ENCODE measurements at regions of chr17 and their contacts with region 1.

Region 1: GRCh38 chr17:45277216-45277849 is 15.4 kb upstream of the SPATA32 start:
- DNase-seq: peak; percentile 84 to 97 (median 90)
- ATAC-seq: peak; percentile 96
- H3K4me3 ChIP-seq: no peak overlapping the region
- H3K4me3 Mint-ChIP-seq: no peak overlapping the region
- H3K27ac ChIP-seq: peak overlapping the region in 1 of 2 donors; percentile 22
- H3K27ac Mint-ChIP-seq: peak overlapping the region; percentile 51
- H3K4me1 ChIP-seq: peaks cover 6% of the 10 kb centered on the region
- H3K4me1 Mint-ChIP-seq: peaks cover 12% of the 10 kb centered on the region
- H3K27me3 ChIP-seq: no peaks in the 10 kb centered on the region
- H3K27me3 Mint-ChIP-seq: no peaks in the 10 kb centered on the region
- CTCF ChIP-seq: peak; percentile 83

Region 2: GRCh38 chr17:45261577-45262515 is 15.5 kb before region 1 on chr17 and contains the start of gene SPATA32:
- CTCF ChIA-PET with region 1: interaction called, 14 read pairs
- POLR2A ChIA-PET with region 1: interaction called, 4 read pairs
- intact Hi-C with region 1: no loop called
- DNase-seq: peak; percentile 38 to 80 (median 66)
- ATAC-seq: peak; percentile 88
- H3K4me3 ChIP-seq: peak within 1 kb of the TSS; percentile 75
- H3K4me3 Mint-ChIP-seq: peak within 1 kb of the TSS; percentile 89
- H3K27ac ChIP-seq: peak within 1 kb of the TSS; percentile 65
- H3K27ac Mint-ChIP-seq: peak within 1 kb of the TSS; percentile 84
- H3K4me1 ChIP-seq: peaks cover 37% of the 10 kb centered on the region
- H3K4me1 Mint-ChIP-seq: peaks cover 40% of the 10 kb centered on the region
- H3K27me3 ChIP-seq: no peaks in the 10 kb centered on the region
- H3K27me3 Mint-ChIP-seq: no peaks in the 10 kb centered on the region
- CTCF ChIP-seq: no peak
- total RNA-seq, gene SPATA32: 0.20 to 0.27 TPM

Region 3: DNA sequence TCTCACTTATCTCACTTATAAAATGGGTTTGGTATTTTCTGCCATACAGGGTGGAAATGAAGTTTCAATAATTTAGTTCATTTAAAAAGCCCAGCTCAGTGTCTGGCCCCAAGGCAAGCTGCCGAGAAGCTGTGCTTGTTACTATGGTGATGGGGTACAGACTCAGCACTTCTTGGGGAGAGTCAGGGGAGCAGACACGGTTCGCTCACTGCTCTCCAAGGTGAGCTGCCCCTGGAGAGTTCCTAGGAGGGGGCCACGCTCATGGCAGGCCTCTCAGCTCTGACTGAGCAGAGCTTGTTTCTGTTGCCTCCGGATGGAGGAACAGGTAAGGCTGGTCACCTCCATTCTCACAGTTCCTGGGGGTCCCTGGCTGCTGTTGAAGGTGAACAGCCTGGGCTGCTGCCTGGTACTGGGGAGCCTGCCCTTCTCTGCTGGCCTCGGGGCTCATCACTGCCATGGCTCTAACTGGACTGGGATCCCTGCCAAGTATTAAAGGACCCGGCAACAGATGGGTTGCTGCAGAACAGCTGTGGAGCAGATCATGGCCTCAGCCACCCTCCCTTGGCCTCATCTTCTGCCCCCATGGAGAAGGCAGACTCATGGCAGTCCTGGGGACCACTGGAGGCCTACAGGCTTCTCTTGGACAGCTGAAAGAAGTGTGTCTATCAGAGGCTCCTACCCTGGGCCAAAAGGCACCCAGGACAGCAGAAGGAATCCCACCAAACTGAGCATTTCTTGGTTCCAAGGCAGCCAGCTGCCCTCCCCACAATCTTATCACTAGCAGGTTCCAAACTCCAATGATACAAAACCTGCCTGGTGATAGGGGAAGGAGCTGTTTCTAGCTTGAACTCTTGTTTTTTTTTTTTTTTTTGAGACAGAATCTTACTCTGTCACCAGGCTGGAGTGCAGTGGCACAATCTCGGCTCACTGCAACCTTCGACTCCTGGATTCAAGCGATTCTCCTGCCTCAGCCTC is 10.5 kb after region 1 on chr17:
- CTCF ChIA-PET with region 1: interaction called, 10 read pairs
- POLR2A ChIA-PET with region 1: no interaction called
- intact Hi-C with region 1: no loop called
- DNase-seq: no peak
- ATAC-seq: no peak
- H3K4me3 ChIP-seq: no peak overlapping the region
- H3K4me3 Mint-ChIP-seq: no peak overlapping the region
- H3K27ac ChIP-seq: peak overlapping the region in 1 of 2 donors; percentile 42
- H3K27ac Mint-ChIP-seq: peak overlapping the region; percentile 14
- H3K4me1 ChIP-seq: peaks cover 12% of the 10 kb centered on the region
- H3K4me1 Mint-ChIP-seq: peaks cover 11% of the 10 kb centered on the region
- H3K27me3 ChIP-seq: no peaks in the 10 kb centered on the region
- H3K27me3 Mint-ChIP-seq: no peaks in the 10 kb centered on the region
- CTCF ChIP-seq: no peak

Region 4: DNA sequence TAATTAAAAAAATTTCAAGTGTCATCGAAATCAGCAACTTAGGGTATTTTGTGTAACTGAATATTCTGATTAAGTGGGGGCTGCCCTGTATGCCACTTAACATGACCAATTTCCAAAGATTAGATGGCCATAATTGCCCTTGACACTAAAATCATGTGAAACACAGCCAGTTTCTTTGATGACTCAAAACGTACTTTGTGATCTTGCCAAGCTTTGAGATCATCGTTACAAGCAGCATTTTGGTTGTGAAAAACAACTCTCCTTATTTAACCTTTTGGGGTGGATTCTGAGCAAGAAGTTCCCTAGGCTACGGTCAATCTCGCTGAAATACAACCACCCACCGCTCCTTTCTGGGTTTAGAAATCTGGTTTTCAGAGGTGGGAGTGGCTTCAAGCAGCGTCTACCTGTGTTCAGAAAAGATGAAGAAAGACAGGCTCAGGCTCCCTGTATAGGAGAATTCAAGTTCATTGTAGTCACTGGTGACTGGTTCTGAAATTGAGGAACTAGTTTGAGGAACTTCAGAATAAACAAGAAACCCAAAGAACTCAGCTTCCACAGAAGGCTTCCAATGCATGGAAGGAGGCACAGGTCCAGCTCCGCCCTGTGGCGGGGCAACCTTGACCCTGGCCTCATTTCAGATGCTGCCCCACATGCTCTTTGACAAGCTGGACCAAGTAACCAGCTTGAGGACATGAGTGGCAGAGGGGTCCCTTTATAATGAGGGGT is 30.1 kb after region 1 on chr17:
- CTCF ChIA-PET with region 1: interaction called, 21 read pairs
- POLR2A ChIA-PET with region 1: interaction called, 23 read pairs
- intact Hi-C with region 1: no loop called
- DNase-seq: peak in 6 of 14 experiments; percentile 18 to 66 (median 42)
- ATAC-seq: peak; percentile 72
- H3K4me3 ChIP-seq: no peak overlapping the region
- H3K4me3 Mint-ChIP-seq: peak overlapping the region; percentile 66
- H3K27ac ChIP-seq: peak overlapping the region; percentile 26 to 38
- H3K27ac Mint-ChIP-seq: peak overlapping the region; percentile 82
- H3K4me1 ChIP-seq: peaks cover 85% of the 10 kb centered on the region
- H3K4me1 Mint-ChIP-seq: peaks cover 83% of the 10 kb centered on the region
- H3K27me3 ChIP-seq: no peaks in the 10 kb centered on the region
- H3K27me3 Mint-ChIP-seq: no peaks in the 10 kb centered on the region
- CTCF ChIP-seq: no peak

Region 5: DNA sequence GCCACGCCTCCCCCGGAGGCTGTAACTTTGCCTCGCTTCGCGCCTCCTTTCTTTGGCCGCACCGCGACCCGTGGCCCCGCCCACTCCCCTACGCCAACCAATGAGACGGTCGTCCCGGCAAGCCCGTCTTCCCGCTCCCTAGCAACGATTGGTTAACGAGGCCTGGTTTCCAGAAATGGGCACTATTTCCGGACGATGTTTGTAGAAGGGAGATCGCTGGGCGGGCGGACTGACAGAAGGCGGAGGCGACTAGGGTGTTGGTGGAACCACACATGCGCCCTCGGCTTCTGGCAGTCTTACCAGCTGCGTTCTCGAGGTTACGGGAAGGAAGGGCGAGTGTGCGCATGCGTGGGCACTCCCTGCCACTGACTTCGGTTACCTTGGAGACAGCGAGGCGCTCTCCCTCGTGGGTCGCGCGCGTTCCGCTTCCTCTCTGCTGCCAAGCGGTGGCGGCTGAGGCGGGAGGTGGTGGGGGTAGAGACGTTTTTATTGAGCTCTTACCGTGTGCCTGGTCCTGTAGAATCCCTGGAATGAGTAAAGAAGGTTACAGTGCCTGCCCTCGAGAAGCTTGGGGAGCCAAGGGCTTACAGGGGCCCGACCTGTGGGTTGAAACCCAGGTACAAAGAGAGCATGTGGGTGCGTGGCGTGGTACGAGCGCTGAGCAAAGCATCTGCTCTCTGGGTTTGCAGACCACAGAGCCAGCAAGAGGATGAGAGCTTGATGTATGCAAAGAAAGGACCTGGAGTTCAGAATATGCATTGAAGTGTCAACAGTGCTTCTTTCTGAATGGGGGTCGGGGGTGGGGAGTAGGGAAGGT is 40.0 kb after region 1 on chr17:
- CTCF ChIA-PET with region 1: interaction called, 48 read pairs
- POLR2A ChIA-PET with region 1: interaction called, 45 read pairs
- intact Hi-C with region 1: loop called (anchors 2 kb)
- DNase-seq: peak; percentile 93 to 100 (median 100)
- ATAC-seq: peak; percentile 83
- H3K4me3 ChIP-seq: peak overlapping the region; percentile 88
- H3K4me3 Mint-ChIP-seq: peak overlapping the region; percentile 98
- H3K27ac ChIP-seq: peak overlapping the region; percentile 51 to 79
- H3K27ac Mint-ChIP-seq: peak overlapping the region; percentile 85
- H3K4me1 ChIP-seq: peaks cover 81% of the 10 kb centered on the region
- H3K4me1 Mint-ChIP-seq: peaks cover 88% of the 10 kb centered on the region
- H3K27me3 ChIP-seq: no peaks in the 10 kb centered on the region
- H3K27me3 Mint-ChIP-seq: no peaks in the 10 kb centered on the region
- CTCF ChIP-seq: no peak

Region 6: DNA sequence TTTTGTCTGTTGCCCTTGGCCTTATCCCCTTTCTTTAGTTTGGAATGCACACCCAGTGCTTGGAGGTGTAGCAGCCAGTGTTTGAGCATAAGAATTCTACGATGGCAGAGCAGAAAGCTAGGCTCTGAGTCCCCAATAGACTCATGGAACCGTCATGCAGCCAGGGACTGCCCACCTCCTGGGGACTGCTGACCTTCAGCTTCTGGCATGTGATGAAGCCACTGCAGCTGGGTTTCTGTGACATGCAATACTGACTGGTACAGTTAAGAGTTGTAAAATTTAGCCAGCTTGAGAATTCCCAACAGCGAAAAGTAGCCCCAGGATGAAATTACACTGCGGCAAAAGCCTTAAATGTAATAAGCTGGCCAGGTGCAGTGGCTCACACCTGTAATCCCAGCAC is 48.5 kb after region 1 on chr17:
- CTCF ChIA-PET with region 1: interaction called, 15 read pairs
- POLR2A ChIA-PET with region 1: interaction called, 3 read pairs
- intact Hi-C with region 1: no loop called
- DNase-seq: no peak
- ATAC-seq: no peak
- H3K4me3 ChIP-seq: no peak overlapping the region
- H3K4me3 Mint-ChIP-seq: no peak overlapping the region
- H3K27ac ChIP-seq: no peak overlapping the region
- H3K27ac Mint-ChIP-seq: no peak overlapping the region
- H3K4me1 ChIP-seq: peaks cover 14% of the 10 kb centered on the region
- H3K4me1 Mint-ChIP-seq: peaks cover 20% of the 10 kb centered on the region
- H3K27me3 ChIP-seq: no peaks in the 10 kb centered on the region
- H3K27me3 Mint-ChIP-seq: no peaks in the 10 kb centered on the region
- CTCF ChIP-seq: no peak

Region 7: DNA sequence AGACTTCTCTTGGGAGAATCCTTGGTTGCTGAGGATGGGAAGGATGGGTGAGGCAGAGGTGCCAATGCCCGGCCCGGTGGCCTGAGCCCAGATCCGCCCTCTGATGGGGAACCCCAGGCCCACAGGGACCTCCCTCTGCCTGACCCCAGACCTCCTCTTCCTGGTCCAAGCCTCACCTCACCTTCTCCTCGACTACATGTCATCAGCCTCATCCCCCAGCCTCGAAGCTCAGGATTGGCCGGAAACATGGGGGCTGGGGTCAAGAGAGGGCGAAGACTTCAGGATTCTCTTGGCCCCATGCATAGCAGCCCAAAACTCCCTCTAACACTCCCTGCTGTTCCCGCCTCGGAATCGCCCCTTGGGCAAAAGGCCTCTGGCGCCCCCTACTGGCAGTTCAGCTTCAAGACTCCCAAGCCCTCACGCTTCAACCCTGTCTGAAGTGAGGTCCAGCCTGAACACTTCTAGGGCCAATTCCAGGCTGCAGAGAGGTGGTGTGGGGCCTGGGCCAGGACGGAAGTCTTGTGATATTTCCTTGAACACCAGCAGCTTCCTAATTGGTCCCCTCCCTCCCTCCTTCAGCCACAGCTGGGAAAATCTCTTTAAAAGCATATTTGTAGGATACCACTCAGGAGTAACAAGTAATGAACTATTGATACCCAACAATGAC is 108.1 kb after region 1 on chr17:
- CTCF ChIA-PET with region 1: interaction called, 83 read pairs
- POLR2A ChIA-PET with region 1: interaction called, 18 read pairs
- intact Hi-C with region 1: loop called (anchors 1 kb)
- DNase-seq: peak; percentile 77 to 97 (median 88)
- ATAC-seq: peak; percentile 97
- H3K4me3 ChIP-seq: no peak overlapping the region
- H3K4me3 Mint-ChIP-seq: no peak overlapping the region
- H3K27ac ChIP-seq: no peak overlapping the region
- H3K27ac Mint-ChIP-seq: no peak overlapping the region
- H3K4me1 ChIP-seq: peaks cover 10% of the 10 kb centered on the region
- H3K4me1 Mint-ChIP-seq: peaks cover 4% of the 10 kb centered on the region
- H3K27me3 ChIP-seq: no peaks in the 10 kb centered on the region
- H3K27me3 Mint-ChIP-seq: peaks cover 12% of the 10 kb centered on the region
- CTCF ChIP-seq: peak; percentile 95

Measured in CD4-positive, alpha-beta T cell (primary cell).